Activated CD4-positive, alpha-beta memory T cell treated with anti-CD3 and anti-CD28 coated beads for 36 hours (primary cell): ENCODE measurements at regions of chr14 and their contacts with region 1.

Region 1: DNA sequence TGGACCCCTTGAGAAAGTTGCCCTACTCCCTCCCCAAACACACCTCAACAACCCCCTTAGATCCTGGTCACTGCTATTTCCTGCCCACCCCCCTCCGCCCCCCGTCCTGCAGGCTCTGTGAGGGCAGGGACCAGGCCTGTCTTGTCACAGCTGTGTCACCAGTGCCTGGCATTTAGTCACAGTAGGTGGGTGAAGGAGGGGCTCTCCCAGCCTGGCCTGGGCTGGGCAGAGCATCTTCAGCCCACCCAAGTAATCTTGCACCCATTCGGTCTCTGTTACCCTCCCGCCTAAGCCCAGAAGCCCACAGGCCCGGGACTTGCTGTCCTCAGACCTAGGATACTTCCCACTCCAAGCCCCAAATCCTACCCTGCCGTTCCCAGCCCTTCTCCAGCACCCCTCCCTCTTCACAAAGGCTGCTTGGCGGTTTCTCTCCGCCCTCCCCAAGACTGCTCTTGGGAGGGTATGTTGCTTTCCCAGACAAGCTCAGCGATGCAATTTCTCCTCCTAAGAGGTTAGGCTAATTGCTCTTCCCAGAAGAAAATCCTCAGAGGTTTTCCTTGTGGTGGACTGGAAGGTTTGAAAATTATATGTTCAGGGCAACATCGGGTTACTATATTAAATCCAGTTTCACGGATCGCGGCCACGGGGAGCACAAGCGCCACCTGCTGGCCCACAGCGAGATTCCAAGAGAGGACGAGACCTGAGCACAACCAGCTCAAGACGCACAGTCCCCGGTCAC is 50.8 kb upstream of the ZFP36L1 start:
- DNase-seq: peak; percentile 84
- H3K4me3 Mint-ChIP-seq: peak overlapping the region; percentile 2
- H3K27ac Mint-ChIP-seq: no peak overlapping the region
- H3K4me1 Mint-ChIP-seq: peaks cover 19% of the 10 kb centered on the region
- H3K27me3 Mint-ChIP-seq: peaks cover 2% of the 10 kb centered on the region

Region 2: GRCh38 chr14:67943947-67944346 is 899.7 kb before region 1 on chr14:
- CTCF ChIA-PET with region 1: interaction called, 15 read pairs
- POLR2A ChIA-PET with region 1: no interaction called
- intact Hi-C with region 1: loop called (anchors 1 kb)
- DNase-seq: peak; percentile 14
- H3K4me3 Mint-ChIP-seq: no peak overlapping the region
- H3K27ac Mint-ChIP-seq: no peak overlapping the region
- H3K4me1 Mint-ChIP-seq: no peaks in the 10 kb centered on the region
- H3K27me3 Mint-ChIP-seq: no peaks in the 10 kb centered on the region

Region 3: GRCh38 chr14:68248481-68249255 is 595.0 kb before region 1 on chr14:
- CTCF ChIA-PET with region 1: interaction called, 32 read pairs
- POLR2A ChIA-PET with region 1: no interaction called
- intact Hi-C with region 1: no loop called
- DNase-seq: no peak
- H3K4me3 Mint-ChIP-seq: no peak overlapping the region
- H3K27ac Mint-ChIP-seq: no peak overlapping the region
- H3K4me1 Mint-ChIP-seq: peaks cover 36% of the 10 kb centered on the region
- H3K27me3 Mint-ChIP-seq: no peaks in the 10 kb centered on the region

Region 4: GRCh38 chr14:68854421-68854820 is 10.8 kb after region 1 on chr14:
- CTCF ChIA-PET with region 1: interaction called, 13 read pairs
- POLR2A ChIA-PET with region 1: no interaction called
- intact Hi-C with region 1: no loop called
- DNase-seq: no peak
- H3K4me3 Mint-ChIP-seq: no peak overlapping the region
- H3K27ac Mint-ChIP-seq: no peak overlapping the region
- H3K4me1 Mint-ChIP-seq: peaks cover 4% of the 10 kb centered on the region
- H3K27me3 Mint-ChIP-seq: no peaks in the 10 kb centered on the region